ENCODE measurements at regions of chr10 and their contacts with region 1.

Region 1: GRCh38 chr10:4767033-4767814 is 58.8 kb upstream of the AKR1E2 start:
- DNase-seq: no peak
- ATAC-seq: peak; percentile 74 to 76
- H3K4me3 ChIP-seq: no peak overlapping the region
- H3K27ac ChIP-seq: peak overlapping the region; percentile 27 to 65 (median 56)
- H3K4me1 ChIP-seq: peaks cover 39 to 50% of the 10 kb centered on the region in 2 donors
- H3K27me3 ChIP-seq: no peaks in the 10 kb centered on the region
- CTCF ChIP-seq: peak; percentile 60 to 76 (median 64)
- POLR2A ChIP-seq: no peak

Region 2: DNA sequence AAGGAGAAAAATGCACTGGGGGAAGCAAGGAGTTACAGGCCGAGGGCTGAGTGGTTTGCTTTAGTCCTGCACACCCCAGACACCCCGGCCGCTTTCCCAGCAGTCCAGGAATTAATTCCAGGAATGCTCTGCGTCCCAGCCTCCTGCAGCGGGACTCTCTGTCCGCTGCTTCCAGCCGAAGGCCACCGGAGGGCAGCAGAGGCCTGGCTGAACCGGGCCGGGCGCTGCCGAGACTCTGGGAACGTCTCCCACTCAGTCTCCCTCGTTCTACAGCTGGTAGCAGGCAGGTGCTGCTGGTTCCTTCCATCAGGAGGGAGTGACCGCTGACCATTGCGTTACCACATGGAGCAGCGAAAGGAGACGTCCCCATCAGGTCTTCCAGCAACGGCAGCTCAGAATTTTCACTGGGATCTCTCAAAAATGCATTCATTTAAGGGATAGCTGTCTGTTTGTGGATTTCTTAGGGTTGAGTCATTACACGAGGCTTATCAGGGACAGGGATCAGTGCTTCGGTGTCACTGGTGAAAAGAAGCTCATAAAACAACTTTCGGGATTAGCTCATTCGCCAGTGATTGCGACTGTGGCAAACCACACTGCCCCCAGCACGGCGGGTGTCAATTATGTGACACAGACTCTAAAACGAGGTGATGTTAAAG is 1569.7 kb before region 1 on chr10:
- in situ Hi-C with region 1: loop called in 3 of 4 experiments (anchors 5 to 10 kb)
- intact Hi-C with region 1: loop called (anchors 1 kb)
- DNase-seq: peak; percentile 66 to 73
- ATAC-seq: peak; percentile 88 to 90
- H3K4me3 ChIP-seq: peak overlapping the region; percentile 20 to 37 (median 30)
- H3K27ac ChIP-seq: no peak overlapping the region
- H3K4me1 ChIP-seq: peaks cover 5 to 7% of the 10 kb centered on the region in 2 donors
- H3K27me3 ChIP-seq: no peaks in the 10 kb centered on the region
- CTCF ChIP-seq: peak; percentile 80 to 96 (median 90)
- POLR2A ChIP-seq: no peak

Region 3: DNA sequence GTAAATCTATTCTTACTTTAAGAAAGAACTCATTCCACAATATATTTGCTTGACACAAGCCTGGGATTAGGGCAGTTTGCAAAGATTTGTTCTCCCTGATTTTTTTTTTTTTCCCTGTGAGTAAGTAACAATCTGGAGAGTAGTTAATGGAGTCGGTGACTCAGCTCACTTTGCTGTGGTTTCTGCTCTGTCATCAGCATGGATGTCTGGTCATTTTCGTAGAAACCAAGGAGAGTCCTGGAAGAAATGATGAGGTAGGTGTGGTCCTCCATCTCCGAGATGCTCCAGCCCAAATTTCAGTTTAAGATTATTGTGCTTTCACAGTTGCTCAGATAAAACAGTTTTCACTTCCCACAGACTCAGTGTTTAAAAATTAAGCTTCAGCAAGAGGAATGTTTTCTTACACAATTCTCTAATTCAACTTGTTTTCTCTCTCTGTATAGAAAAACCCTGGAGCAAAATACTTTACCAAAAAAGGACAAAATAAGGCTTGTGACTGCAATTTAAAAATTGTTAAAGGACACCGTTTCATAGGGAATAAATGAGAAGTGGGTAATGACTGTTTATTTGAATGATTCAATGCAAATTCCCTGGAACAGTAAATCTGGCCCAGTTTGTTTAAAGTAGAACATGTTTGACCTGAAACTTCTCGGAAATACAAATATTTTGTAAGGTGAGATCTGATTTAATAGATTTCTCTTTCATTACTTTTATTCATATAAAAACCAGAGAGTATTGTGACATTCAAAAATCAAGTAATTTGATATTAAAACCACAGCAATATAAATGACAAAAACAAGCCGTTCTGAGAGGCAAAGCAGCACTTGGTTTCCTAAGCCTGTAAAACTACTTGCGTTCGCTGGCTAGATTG is 1518.1 kb before region 1 on chr10:
- in situ Hi-C with region 1: loop called in 1 of 4 experiments (anchors 10 kb)
- intact Hi-C with region 1: no loop called
- DNase-seq: no peak
- ATAC-seq: peak; percentile 47 to 61
- H3K4me3 ChIP-seq: no peak overlapping the region
- H3K27ac ChIP-seq: peak overlapping the region in 2 of 4 donors; percentile 30 to 44
- H3K4me1 ChIP-seq: no peaks in the 10 kb centered on the region
- H3K27me3 ChIP-seq: no peaks in the 10 kb centered on the region
- CTCF ChIP-seq: no peak
- POLR2A ChIP-seq: no peak

Region 4: GRCh38 chr10:3740157-3740871 is 1026.9 kb before region 1 on chr10:
- in situ Hi-C with region 1: no loop called
- intact Hi-C with region 1: loop called (anchors 10 kb)
- DNase-seq: no peak
- ATAC-seq: peak; percentile 88 to 96
- H3K4me3 ChIP-seq: no peak overlapping the region
- H3K27ac ChIP-seq: peak overlapping the region; percentile 19 to 56 (median 40)
- H3K4me1 ChIP-seq: peaks cover 2 to 3% of the 10 kb centered on the region in 2 donors
- H3K27me3 ChIP-seq: no peaks in the 10 kb centered on the region
- CTCF ChIP-seq: no peak
- POLR2A ChIP-seq: no peak

Region 5: GRCh38 chr10:4498711-4499251 is 268.4 kb before region 1 on chr10:
- in situ Hi-C with region 1: loop called in 2 of 4 experiments (anchors 25 kb)
- intact Hi-C with region 1: loop called (anchors 5 kb)
- DNase-seq: peak in 1 of 2 donors; percentile 11
- ATAC-seq: peak; percentile 66 to 93
- H3K4me3 ChIP-seq: peak overlapping the region in 1 of 4 donors; percentile 19
- H3K27ac ChIP-seq: peak overlapping the region; percentile 57 to 74 (median 62)
- H3K4me1 ChIP-seq: peaks cover 15 to 17% of the 10 kb centered on the region in 2 donors
- H3K27me3 ChIP-seq: no peaks in the 10 kb centered on the region
- CTCF ChIP-seq: no peak
- POLR2A ChIP-seq: no peak

Region 6: GRCh38 chr10:4656576-4657182 is 110.5 kb before region 1 on chr10:
- in situ Hi-C with region 1: loop called in 2 of 4 experiments (anchors 5 to 10 kb)
- intact Hi-C with region 1: loop called (anchors 1 kb)
- DNase-seq: peak; percentile 53 to 55
- ATAC-seq: peak; percentile 53 to 59
- H3K4me3 ChIP-seq: no peak overlapping the region
- H3K27ac ChIP-seq: peak overlapping the region in 1 of 4 donors; percentile 16
- H3K4me1 ChIP-seq: peaks cover 16% of the 10 kb centered on the region in 2 donors
- H3K27me3 ChIP-seq: no peaks in the 10 kb centered on the region
- CTCF ChIP-seq: peak; percentile 84 to 95 (median 89)
- POLR2A ChIP-seq: no peak

Region 7: DNA sequence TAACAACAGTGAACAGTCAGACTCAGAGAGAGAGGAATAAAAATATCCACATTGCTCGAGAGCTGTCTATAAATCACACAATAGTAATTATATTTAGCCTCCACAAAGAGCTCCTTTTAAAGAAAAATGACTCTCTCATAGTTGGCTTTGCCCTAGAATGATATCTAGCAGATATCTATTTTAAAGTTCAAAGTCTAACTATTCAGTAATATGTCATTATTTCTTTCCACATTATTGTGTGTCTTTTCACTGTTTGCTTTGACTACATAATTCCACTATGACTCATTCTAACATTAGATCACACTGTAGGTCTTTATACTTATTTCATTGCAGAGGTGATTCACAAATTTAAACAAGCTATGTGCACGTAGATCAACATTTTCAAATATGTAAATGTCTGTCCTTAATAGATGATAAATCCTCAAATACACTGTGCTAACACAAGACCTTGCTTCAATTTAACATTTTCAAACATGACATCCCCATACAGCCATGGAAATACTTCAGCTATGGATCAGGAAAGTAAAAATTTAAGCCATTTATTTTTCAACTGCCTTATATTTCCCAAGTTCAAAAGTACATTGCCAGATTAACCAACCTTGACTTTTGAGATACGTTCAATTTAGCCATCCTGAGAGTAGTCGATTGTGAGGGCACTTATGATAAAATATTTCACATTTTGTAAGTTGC is 41.2 kb before region 1 on chr10:
- in situ Hi-C with region 1: no loop called
- intact Hi-C with region 1: no loop called
- DNase-seq: no peak
- ATAC-seq: peak in 1 of 2 donors; percentile 37
- H3K4me3 ChIP-seq: no peak overlapping the region
- H3K27ac ChIP-seq: peak overlapping the region in 1 of 4 donors; percentile 27
- H3K4me1 ChIP-seq: peaks cover 10 to 21% of the 10 kb centered on the region in 2 donors
- H3K27me3 ChIP-seq: no peaks in the 10 kb centered on the region
- CTCF ChIP-seq: no peak
- POLR2A ChIP-seq: no peak